Esophagus squamous epithelium (tissue), 5 donors: ENCODE measurements at regions of chr1 and their contacts with region 1.

Region 1: DNA sequence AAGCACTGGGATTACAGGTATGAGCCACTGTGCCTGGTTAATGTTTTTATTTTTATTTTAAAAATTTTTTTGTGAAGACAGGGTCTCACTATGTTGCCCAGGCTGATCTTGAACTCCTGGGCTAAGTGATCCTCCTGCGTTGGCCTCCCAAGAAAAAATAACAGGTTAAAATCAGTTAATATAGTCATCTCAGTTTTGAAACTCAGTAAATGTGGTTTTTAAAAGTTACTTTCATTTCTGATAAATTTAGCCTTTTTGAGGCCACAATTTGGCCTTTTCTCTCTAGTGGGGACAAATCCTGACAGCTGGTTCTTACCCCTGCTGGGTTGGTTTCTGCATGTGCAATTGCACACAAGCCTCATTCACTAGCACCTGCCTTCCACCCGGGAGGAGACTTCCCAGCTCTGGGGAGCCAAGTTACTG is 13.3 kb downstream of the PMF1 start:
- DNase-seq: no peak
- H3K4me3 ChIP-seq: no peak overlapping the region
- H3K27ac ChIP-seq: peak overlapping the region in 1 of 4 donors; percentile 1
- H3K4me1 ChIP-seq: peaks cover 0 to 12% (median 0%) of the 10 kb centered on the region in 3 donors
- H3K27me3 ChIP-seq: no peaks in the 10 kb centered on the region
- CTCF ChIP-seq: no peak
- POLR2A ChIP-seq: no peak

Region 2: GRCh38 chr1:156090822-156091188 is 135.3 kb before region 1 on chr1:
- intact Hi-C with region 1: loop called (anchors 5 kb)
- DNase-seq: no peak
- H3K4me3 ChIP-seq: no peak overlapping the region
- H3K27ac ChIP-seq: no peak overlapping the region
- H3K4me1 ChIP-seq: peaks cover 0 to 19% (median 13%) of the 10 kb centered on the region in 3 donors
- H3K27me3 ChIP-seq: no peaks in the 10 kb centered on the region
- CTCF ChIP-seq: peak; percentile 85 to 92 (median 88)
- POLR2A ChIP-seq: no peak

Region 3: DNA sequence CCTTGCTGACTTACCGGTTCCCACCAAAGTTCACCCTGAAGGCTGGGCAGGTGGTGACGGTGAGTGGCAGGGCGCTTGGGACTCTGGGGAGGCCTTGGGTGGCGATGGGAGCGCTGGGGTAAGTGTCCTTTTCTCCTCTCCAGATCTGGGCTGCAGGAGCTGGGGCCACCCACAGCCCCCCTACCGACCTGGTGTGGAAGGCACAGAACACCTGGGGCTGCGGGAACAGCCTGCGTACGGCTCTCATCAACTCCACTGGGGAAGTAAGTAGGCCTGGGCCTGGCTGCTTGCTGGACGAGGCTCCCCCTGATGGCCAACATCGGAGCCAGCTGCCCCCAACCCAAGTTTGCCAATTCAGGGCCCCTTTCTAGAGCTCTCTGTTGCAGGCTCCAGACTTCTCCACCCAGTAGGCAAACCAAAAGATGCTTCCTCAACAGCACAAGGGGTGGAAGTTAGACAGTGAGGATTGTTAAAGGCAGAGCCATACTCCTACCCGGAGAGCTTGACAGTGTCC is 89.1 kb before region 1 on chr1:
- intact Hi-C with region 1: loop called (anchors 5 kb)
- DNase-seq: no peak
- H3K4me3 ChIP-seq: no peak overlapping the region
- H3K27ac ChIP-seq: no peak overlapping the region
- H3K4me1 ChIP-seq: peaks cover 6 to 40% (median 7%) of the 10 kb centered on the region in 3 donors
- H3K27me3 ChIP-seq: no peaks in the 10 kb centered on the region
- CTCF ChIP-seq: no peak
- POLR2A ChIP-seq: no peak

Region 4: GRCh38 chr1:156295391-156295947 is 69.3 kb after region 1 on chr1 and contains the start of gene GLMP:
- intact Hi-C with region 1: no loop called
- DNase-seq: no peak
- H3K4me3 ChIP-seq: peak within 1 kb of the TSS; percentile 53 to 76 (median 74)
- H3K27ac ChIP-seq: peak within 1 kb of the TSS; percentile 55 to 82 (median 76)
- H3K4me1 ChIP-seq: peaks cover 16 to 58% (median 25%) of the 10 kb centered on the region in 3 donors
- H3K27me3 ChIP-seq: no peaks in the 10 kb centered on the region
- CTCF ChIP-seq: no peak
- POLR2A ChIP-seq: no peak
- total RNA-seq, gene GLMP: 16.1 to 44.2 (median 27.7) TPM